Psoas muscle (tissue), 8 donors: ENCODE measurements at regions of chr17 and their contacts with region 1.

Region 1: DNA sequence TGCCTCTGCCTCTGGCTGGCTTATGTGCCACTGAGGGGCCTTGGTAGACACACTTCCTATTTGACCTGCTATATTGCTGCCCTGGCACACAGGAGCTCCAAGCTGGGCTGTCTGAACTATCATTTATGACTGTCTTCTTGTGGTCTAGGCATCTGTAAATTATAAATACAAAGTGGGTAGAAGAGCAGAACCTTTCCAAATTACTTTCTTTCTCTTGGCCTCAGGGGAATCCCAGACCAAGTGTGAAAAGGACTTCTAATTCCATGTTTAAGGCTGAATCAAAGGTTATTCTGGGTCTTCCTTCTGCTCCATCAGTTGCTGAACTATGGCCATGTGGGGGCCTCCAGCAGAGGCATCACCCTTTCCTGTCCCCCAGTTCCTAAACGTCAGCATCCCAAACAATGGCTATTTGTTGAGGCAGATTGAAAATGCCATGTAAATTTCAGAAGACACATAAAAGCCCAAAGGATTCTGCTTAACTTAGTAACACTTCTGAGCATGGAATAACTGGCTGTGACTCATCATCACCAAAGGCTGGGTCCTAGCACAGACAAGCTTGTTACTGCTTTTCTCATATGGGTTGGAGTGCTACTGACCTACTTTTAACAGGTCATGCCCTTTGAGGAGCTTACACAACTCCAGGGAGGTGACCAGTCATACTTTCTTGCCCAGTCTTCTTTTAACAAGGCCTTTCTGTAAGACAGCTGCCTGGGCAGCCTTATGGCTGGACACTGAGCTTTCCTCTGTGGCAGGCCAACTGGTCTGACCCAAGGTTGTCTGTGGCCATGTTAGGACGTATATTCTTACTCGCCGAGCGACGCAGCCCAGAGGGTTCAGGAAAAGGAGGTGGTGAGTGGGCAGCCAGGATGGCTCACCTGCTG is 154.8 kb downstream of the VPS53 start:
- DNase-seq: peak; percentile 52 to 76
- ATAC-seq: peak; percentile 92 to 95 (median 94)
- H3K4me3 ChIP-seq: no peak overlapping the region
- H3K27ac ChIP-seq: peak overlapping the region; percentile 80
- H3K4me1 ChIP-seq: peaks cover 24% of the 10 kb centered on the region
- H3K27me3 ChIP-seq: no peaks in the 10 kb centered on the region
- CTCF ChIP-seq: no peak

Region 2: DNA sequence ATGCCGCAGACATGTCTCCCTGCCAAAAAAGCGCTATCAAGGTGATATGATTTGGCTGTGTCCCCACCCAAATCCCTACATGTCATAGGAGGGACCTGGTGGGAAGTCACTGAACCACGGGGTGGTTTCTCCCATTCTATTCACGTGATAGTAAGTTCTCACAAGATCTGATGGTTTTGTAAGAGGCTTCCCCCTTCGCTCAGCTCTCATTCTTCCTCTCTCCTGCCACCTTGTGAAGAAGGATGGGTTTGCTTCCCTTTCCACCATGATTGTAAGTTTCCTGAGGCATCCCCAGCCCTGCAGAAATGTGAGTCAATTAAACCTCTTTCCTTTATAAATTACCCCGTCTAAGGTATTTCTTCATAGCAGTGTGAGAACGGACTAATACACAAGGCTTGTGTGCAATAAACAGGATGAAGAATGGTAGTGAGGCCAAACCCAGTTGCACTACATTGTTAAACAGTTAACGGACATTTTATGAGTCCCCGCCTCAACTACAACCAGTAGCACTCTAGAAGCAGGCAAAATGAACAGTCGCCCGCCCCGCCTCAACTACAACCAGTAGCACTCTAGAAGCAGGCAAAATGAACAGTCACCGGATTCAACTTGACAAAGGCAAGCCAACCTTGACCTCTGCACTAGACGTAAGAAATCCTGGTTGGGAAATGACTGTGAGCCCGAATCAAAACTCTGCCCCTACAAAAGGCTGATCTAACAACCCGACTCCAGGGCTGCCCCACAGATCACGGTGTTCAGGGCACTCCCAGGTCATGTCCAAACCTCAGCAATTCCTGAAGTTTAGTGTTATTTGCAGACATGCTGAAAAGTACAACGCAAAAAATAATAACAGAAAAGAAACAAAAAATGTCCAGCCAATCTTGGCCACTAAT is 128.6 kb after region 1 on chr17:
- intact Hi-C with region 1: loop called in 1 of 2 experiments (anchors 10 kb)
- DNase-seq: no peak
- ATAC-seq: no peak
- H3K4me3 ChIP-seq: no peak overlapping the region
- H3K27ac ChIP-seq: no peak overlapping the region
- H3K4me1 ChIP-seq: peaks cover 16% of the 10 kb centered on the region
- H3K27me3 ChIP-seq: no peaks in the 10 kb centered on the region
- CTCF ChIP-seq: no peak